Sigmoid colon (tissue), 7 donors: ENCODE measurements at regions of chr9 and their contacts with region 1.

Region 1: GRCh38 chr9:111759762-111760639 is 34.7 kb downstream of the SHOC1 start:
- DNase-seq: no peak
- H3K4me3 ChIP-seq: no peak overlapping the region
- H3K27ac ChIP-seq: peak overlapping the region in 1 of 4 donors; percentile 11
- H3K4me1 ChIP-seq: peaks cover 0 to 11% (median 1%) of the 10 kb centered on the region in 4 donors
- H3K27me3 ChIP-seq: no peaks in the 10 kb centered on the region
- CTCF ChIP-seq: peak; percentile 31 to 73 (median 62)
- EP300 ChIP-seq: no peak
- POLR2A ChIP-seq: no peak

Region 2: GRCh38 chr9:111187376-111187775 is 572.6 kb before region 1 on chr9:
- intact Hi-C with region 1: no loop called
- DNase-seq: no peak
- H3K4me3 ChIP-seq: no peak overlapping the region
- H3K27ac ChIP-seq: no peak overlapping the region
- H3K4me1 ChIP-seq: no peaks in the 10 kb centered on the region
- H3K27me3 ChIP-seq: no peaks in the 10 kb centered on the region
- CTCF ChIP-seq: no peak
- EP300 ChIP-seq: no peak
- POLR2A ChIP-seq: no peak

Region 3: DNA sequence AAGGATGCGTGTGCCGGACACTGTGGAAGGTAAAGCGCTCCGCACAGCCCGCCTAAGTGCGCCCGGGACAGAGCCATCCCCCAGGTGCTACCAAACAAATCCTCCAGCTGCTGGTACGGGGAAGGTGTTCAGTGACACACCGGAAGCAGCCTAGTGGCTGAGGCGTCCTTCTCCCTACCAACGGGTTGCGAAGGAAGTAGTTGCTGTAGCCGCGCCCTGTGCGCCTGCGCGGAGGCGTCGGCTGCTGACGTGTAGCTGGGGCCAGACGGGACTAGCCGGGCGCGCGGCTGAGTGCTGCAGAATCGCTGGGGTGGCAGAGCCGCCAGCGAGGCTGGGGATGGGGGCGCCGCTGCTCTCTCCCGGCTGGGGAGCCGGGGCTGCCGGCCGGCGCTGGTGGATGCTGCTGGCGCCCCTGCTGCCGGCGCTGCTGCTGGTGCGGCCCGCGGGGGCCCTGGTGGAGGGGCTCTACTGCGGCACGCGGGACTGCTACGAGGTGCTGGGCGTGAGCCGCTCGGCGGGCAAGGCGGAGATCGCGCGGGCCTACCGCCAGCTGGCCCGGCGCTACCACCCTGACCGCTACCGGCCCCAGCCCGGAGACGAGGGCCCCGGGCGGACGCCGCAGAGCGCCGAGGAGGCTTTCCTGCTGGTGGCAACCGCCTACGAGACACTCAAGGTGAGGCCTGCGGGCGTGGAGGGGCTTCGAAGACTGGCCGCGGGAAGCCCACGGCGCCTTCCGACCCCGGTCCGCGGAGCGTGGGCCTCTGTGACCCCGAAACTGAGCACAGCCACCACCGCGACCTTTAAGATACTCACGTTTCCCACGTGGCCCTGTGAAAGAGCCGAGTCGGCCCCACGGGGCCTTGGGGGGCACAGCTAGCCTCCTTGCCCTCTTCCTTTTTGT is 128.7 kb before region 1 on chr9 and contains the start of gene DNAJC25:
- intact Hi-C with region 1: no loop called
- DNase-seq: peak; percentile 98
- H3K4me3 ChIP-seq: peak within 1 kb of the TSS; percentile 82 to 97 (median 88)
- H3K27ac ChIP-seq: peak within 1 kb of the TSS; percentile 91 to 94 (median 92)
- H3K4me1 ChIP-seq: peaks cover 0 to 35% (median 25%) of the 10 kb centered on the region in 4 donors
- H3K27me3 ChIP-seq: no peaks in the 10 kb centered on the region
- CTCF ChIP-seq: no peak
- EP300 ChIP-seq: no peak
- POLR2A ChIP-seq: peak; percentile 86 to 87
- total RNA-seq, gene DNAJC25: 7.4 to 11.5 (median 9.1) TPM

Region 4: DNA sequence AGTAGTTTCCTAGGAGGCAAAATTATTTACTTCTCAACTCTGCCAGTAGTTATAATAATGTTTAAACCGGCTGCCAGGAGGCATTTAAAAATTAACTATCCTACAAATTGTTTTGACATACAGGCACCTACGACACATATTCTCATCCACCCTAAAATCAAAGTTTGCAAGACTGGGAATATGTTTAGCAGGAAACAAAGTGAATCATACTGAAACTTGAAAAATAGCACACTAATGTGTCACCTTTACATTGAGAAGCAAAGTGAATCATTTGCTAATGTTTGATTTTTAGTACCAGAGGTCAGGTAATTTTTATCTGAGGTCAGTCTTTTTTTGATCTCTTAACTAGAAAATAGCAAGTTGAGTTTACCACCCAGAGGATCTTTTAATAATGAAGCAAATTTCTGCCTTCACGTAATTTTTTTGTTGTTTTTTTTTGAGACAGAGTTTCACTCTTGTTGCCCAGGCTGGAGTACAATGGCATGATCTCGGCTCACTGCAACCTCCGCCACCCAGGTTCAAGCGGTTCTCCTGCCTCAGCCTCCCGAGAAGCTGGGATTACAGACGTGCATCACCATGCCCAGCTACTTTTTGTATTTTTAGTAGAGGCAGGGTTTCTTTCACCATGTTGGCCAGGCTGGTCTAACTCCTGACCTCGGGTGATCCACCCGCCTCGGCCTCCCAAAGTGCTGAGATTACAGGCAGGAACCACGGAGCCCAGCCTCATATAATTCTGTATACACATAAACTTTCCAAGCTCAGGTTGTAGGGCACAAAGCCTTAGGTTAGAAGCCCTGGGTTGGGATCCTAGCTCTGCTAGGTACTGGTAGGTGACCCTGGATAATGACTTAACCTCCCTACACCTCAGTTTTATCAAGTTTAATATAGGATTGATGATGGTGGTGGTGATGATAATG is 260.9 kb after region 1 on chr9:
- intact Hi-C with region 1: loop called (anchors 5 kb)
- DNase-seq: no peak
- H3K4me3 ChIP-seq: no peak overlapping the region
- H3K27ac ChIP-seq: peak overlapping the region in 2 of 4 donors; percentile 26 to 38
- H3K4me1 ChIP-seq: peaks cover 0 to 24% (median 9%) of the 10 kb centered on the region in 4 donors
- H3K27me3 ChIP-seq: no peaks in the 10 kb centered on the region
- CTCF ChIP-seq: no peak
- EP300 ChIP-seq: no peak
- POLR2A ChIP-seq: no peak

Region 5: GRCh38 chr9:112037281-112038016 is 277.4 kb after region 1 on chr9:
- intact Hi-C with region 1: no loop called
- DNase-seq: no peak
- H3K4me3 ChIP-seq: no peak overlapping the region
- H3K27ac ChIP-seq: no peak overlapping the region
- H3K4me1 ChIP-seq: peaks cover 0 to 26% (median 15%) of the 10 kb centered on the region in 4 donors
- H3K27me3 ChIP-seq: no peaks in the 10 kb centered on the region
- CTCF ChIP-seq: no peak
- EP300 ChIP-seq: no peak
- POLR2A ChIP-seq: no peak

Region 6: GRCh38 chr9:112333639-112334431 is 573.8 kb after region 1 on chr9:
- intact Hi-C with region 1: loop called (anchors 10 kb)
- DNase-seq: peak; percentile 97
- H3K4me3 ChIP-seq: peak overlapping the region; percentile 59 to 99 (median 79)
- H3K27ac ChIP-seq: peak overlapping the region; percentile 94 to 99 (median 98)
- H3K4me1 ChIP-seq: peaks cover 2 to 15% (median 11%) of the 10 kb centered on the region in 4 donors
- H3K27me3 ChIP-seq: no peaks in the 10 kb centered on the region
- CTCF ChIP-seq: peak; percentile 25 to 69 (median 43)
- EP300 ChIP-seq: no peak
- POLR2A ChIP-seq: no peak

Region 7: GRCh38 chr9:112361601-112362000 is 601.6 kb after region 1 on chr9:
- intact Hi-C with region 1: loop called (anchors 5 kb)
- DNase-seq: no peak
- H3K4me3 ChIP-seq: no peak overlapping the region
- H3K27ac ChIP-seq: no peak overlapping the region
- H3K4me1 ChIP-seq: no peaks in the 10 kb centered on the region
- H3K27me3 ChIP-seq: no peaks in the 10 kb centered on the region
- CTCF ChIP-seq: peak; percentile 23 to 64 (median 46)
- EP300 ChIP-seq: no peak
- POLR2A ChIP-seq: no peak